ENCODE measurements at regions of chr1 and their contacts with region 1.

Region 1: DNA sequence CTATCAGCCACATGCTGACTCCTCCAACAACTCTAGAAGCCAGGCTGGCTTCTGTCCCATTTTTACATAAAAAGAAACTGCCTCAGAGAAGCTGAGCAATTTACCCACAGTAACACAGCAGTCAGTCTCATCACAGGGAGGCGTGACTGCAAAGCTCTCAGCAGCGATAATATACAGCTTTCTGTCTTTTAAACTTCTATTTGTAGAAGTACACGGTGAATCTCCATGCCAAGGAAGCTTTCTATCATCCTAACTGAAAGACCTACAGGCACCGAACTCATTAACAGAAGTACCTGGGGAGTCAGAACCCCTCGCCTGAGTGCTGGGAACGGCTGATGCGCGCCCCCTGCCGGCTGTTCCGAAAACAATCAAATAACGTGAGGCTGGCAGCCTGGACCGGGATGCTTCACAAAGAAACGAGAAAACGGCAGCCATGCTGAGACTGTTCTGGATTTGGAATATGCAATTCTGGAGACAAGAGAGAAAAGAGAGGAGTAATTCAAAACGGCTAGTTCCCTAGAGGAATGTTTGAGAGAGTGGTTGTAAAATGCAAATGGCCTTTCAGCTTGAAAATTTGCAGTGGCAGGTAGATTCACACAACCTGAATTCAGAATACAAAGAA is 43.5 kb upstream of the RAB4A start:
- DNase-seq: peak; percentile 63
- H3K4me3 Mint-ChIP-seq: no peak overlapping the region
- H3K27ac Mint-ChIP-seq: no peak overlapping the region
- H3K4me1 Mint-ChIP-seq: peaks cover 13% of the 10 kb centered on the region
- H3K27me3 Mint-ChIP-seq: peaks cover 29% of the 10 kb centered on the region

Region 2: DNA sequence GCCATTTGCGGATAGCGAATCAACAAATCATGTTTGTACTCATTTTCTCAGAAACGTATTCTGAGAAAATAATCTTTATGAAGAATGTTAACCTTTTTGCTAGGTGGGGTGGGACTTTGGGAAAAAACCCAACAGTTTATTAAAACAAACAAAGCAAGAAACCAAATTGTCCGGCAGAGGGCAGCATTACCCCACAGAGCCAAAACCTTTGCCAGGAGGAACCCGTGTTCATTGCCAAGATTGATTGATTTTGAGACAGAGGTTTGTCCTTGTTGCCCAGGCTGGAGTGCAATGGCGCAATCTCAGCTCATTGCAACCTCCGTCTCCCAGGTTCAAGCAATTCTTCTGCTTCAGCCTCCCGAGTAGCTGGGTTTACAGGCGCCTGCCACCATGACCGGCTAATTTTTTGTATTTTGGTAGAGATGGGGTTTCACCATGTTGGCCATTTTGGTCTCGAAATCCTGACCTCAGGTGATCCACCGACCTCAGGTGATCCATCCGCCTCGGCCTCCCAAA is 563.0 kb before region 1 on chr1:
- intact Hi-C with region 1: loop called (anchors 1 kb)
- DNase-seq: peak; percentile 56
- H3K4me3 Mint-ChIP-seq: no peak overlapping the region
- H3K27ac Mint-ChIP-seq: no peak overlapping the region
- H3K4me1 Mint-ChIP-seq: no peaks in the 10 kb centered on the region
- H3K27me3 Mint-ChIP-seq: peaks cover 18% of the 10 kb centered on the region

Region 3: DNA sequence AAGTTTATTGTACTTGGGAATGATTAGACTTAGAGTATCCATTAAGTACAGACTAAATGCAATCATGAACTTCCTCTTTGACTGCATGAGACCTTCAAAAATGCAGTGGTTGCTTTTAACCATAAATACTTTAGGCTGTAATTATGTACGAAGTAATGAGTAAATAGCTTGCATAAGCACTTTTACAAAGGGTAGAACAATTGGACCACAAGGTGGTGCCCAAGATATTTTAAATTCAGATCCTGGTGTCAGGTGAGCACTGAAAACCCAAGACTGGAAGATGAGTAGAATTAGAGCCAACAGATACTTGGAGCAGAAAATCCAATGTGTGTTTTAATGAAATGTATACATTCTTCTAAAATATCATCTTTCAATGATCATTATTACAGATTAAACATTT is 535.5 kb before region 1 on chr1:
- intact Hi-C with region 1: loop called (anchors 5 kb)
- DNase-seq: no peak
- H3K4me3 Mint-ChIP-seq: no peak overlapping the region
- H3K27ac Mint-ChIP-seq: no peak overlapping the region
- H3K4me1 Mint-ChIP-seq: peaks cover 9% of the 10 kb centered on the region
- H3K27me3 Mint-ChIP-seq: peaks cover 32% of the 10 kb centered on the region

Region 4: DNA sequence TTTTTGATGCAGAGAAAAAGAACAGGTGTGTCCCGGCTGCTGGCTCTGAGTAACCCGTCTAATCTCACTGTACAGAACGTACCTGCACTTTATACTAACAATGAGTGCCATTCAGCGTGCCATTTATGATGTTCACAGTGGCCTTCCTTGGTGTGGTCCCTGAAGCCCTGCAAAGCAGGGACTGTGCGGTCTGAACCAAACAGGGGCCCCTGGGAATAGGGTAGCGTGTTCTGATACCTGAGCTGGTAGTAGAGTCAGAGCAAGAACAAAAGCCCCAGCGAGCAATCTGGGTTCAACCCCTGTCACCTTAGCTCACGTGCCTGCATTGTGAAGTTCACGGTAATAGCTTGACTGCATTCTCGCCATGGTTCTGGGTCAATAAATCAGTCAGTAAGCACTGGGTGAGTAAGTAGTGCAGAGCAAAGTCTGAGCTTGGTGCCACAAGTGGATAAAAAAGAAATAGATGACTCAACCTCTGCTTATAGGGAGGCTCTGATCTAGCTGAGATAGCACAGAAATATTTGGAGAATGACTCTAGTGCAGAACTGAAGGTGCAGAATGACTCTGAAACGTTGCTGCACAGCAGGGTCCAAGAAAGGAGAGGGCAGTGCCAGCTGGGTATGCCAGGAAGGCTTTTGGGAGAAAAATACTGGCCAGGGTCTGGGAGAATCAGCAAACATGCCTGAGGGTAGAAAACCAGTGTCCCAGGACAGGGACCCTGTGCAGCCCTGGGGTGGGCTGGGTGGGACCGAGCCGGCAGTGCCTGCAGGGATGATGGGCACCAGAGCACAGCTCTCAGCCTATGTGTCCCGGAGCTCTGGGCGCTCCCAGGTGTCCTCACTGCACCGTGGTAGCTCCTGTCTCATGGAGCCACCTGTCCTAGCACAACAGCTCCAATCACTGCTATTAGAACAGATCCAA is 366.2 kb before region 1 on chr1:
- intact Hi-C with region 1: no loop called
- DNase-seq: no peak
- H3K4me3 Mint-ChIP-seq: no peak overlapping the region
- H3K27ac Mint-ChIP-seq: no peak overlapping the region
- H3K4me1 Mint-ChIP-seq: peaks cover 14% of the 10 kb centered on the region
- H3K27me3 Mint-ChIP-seq: peaks cover 25% of the 10 kb centered on the region

Region 5: GRCh38 chr1:229836324-229836723 is 608.9 kb after region 1 on chr1:
- intact Hi-C with region 1: no loop called
- DNase-seq: no peak
- H3K4me3 Mint-ChIP-seq: no peak overlapping the region
- H3K27ac Mint-ChIP-seq: no peak overlapping the region
- H3K4me1 Mint-ChIP-seq: no peaks in the 10 kb centered on the region
- H3K27me3 Mint-ChIP-seq: peaks cover 12% of the 10 kb centered on the region

Measured in activated T-helper 2 cell treated with anti-CD3 and anti-CD28 coated beads, Interferon-gamma antibody, Interleukin-2, Interleukin-4, amounts not matched to agents 10 μg/mL and 5 μg/mL and 100 μg/mL, durations not matched to agents 14 hours and 24 hours and 36 hours (primary cell).